K562 (cell line): ENCODE measurements at regions of chr11 and their contacts with region 1.

Region 1: GRCh38 chr11:118592616-118593367 is 14.6 kb upstream of the PHLDB1 start:
- DNase-seq: no peak
- ATAC-seq: no peak
- H3K4me3 ChIP-seq: no peak overlapping the region
- H3K27ac ChIP-seq: no peak overlapping the region
- H3K4me1 ChIP-seq: no peaks in the 10 kb centered on the region; a peak in 1 of 5 replicates
- H3K27me3 ChIP-seq: no peaks in the 10 kb centered on the region
- CTCF ChIP-seq: no peak
- EP300 ChIP-seq: no peak
- POLR2A ChIP-seq: no peak
- RAD21 ChIP-seq: no peak

Region 2: DNA sequence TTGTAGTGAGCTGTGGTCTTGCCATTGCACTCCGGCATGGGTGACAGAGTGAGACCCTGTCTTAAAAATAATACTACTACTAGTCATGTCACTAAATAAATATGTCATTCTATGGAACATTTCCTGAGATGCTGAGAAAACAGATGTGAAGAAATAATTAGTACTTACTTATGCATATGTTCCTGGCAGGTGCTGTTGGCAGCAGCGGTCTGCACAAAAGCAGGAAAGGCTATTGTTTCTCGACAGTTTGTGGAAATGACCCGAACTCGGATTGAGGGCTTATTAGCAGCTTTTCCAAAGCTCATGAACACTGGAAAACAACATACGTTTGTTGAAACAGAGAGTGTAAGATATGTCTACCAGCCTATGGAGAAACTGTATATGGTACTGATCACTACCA is 11.7 kb before region 1 on chr11:
- CTCF ChIA-PET with region 1: no interaction called
- POLR2A ChIA-PET with region 1: interaction called, 19 read pairs
- in situ Hi-C with region 1: no loop called
- intact Hi-C with region 1: no loop called
- DNase-seq: no peak
- ATAC-seq: no peak
- H3K4me3 ChIP-seq: no peak overlapping the region
- H3K27ac ChIP-seq: no peak overlapping the region
- H3K4me1 ChIP-seq: no peaks in the 10 kb centered on the region
- H3K27me3 ChIP-seq: no peaks in the 10 kb centered on the region
- CTCF ChIP-seq: no peak
- EP300 ChIP-seq: no peak
- POLR2A ChIP-seq: no peak
- RAD21 ChIP-seq: no peak

Region 3: GRCh38 chr11:118605116-118605867 is 12.5 kb after region 1 on chr11:
- CTCF ChIA-PET with region 1: no interaction called
- POLR2A ChIA-PET with region 1: interaction called, 20 read pairs
- in situ Hi-C with region 1: no loop called
- intact Hi-C with region 1: no loop called
- DNase-seq: peak; percentile 52 to 86 (median 64)
- ATAC-seq: peak; percentile 16
- H3K4me3 ChIP-seq: no peak overlapping the region
- H3K27ac ChIP-seq: peak overlapping the region; percentile 14; the same call in 1 of the 3 replicates
- H3K4me1 ChIP-seq: peaks cover 54 to 55% of the 10 kb centered on the region in 2 experiments
- H3K27me3 ChIP-seq: no peaks in the 10 kb centered on the region
- CTCF ChIP-seq: no peak
- EP300 ChIP-seq: no peak; the same call in 1 of the 2 replicates
- POLR2A ChIP-seq: no peak
- RAD21 ChIP-seq: no peak

Region 4: GRCh38 chr11:118610804-118611795 is 18.3 kb after region 1 on chr11:
- CTCF ChIA-PET with region 1: interaction called, 3 read pairs
- POLR2A ChIA-PET with region 1: interaction called, 20 read pairs
- in situ Hi-C with region 1: no loop called
- intact Hi-C with region 1: loop called (anchors 1 kb)
- DNase-seq: peak; percentile 72 to 91 (median 76)
- ATAC-seq: peak; percentile 81
- H3K4me3 ChIP-seq: no peak overlapping the region
- H3K27ac ChIP-seq: peak overlapping the region; percentile 38; the same call in 1 of the 3 replicates
- H3K4me1 ChIP-seq: peaks cover 21 to 51% of the 10 kb centered on the region in 2 experiments
- H3K27me3 ChIP-seq: no peaks in the 10 kb centered on the region
- CTCF ChIP-seq: peak; percentile 88 to 97 (median 92)
- EP300 ChIP-seq: peak; percentile 52
- POLR2A ChIP-seq: no peak
- RAD21 ChIP-seq: peak; percentile 66 to 90

Region 5: DNA sequence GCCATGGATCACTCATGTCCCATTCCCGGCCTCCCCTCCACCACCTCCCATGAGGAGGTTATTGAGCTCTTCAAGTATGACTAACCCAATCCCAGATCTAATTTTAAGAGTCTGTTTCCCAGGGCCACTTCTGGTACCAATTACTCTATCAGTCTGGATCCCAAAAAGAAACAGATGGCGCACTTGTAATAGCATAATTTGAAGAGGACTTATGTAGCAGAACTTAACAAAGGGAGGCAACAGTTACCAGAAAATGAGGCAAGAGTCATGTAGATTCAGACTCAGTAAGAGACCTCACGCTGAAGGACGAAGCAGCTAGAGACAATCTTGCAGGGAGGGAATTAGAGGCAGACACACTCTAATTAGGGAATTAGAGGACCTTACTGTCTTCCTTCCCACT is 151.3 kb after region 1 on chr11:
- CTCF ChIA-PET with region 1: no interaction called
- POLR2A ChIA-PET with region 1: no interaction called
- in situ Hi-C with region 1: no loop called
- intact Hi-C with region 1: no loop called
- DNase-seq: no peak
- ATAC-seq: no peak
- H3K4me3 ChIP-seq: no peak overlapping the region
- H3K27ac ChIP-seq: no peak overlapping the region
- H3K4me1 ChIP-seq: peaks cover 0 to 29% of the 10 kb centered on the region in 2 experiments; a peak in 3 of 5 replicates
- H3K27me3 ChIP-seq: no peaks in the 10 kb centered on the region
- CTCF ChIP-seq: no peak
- EP300 ChIP-seq: no peak
- POLR2A ChIP-seq: no peak
- RAD21 ChIP-seq: no peak